ENCODE measurements at regions of chr17 and their contacts with region 1.

Region 1: DNA sequence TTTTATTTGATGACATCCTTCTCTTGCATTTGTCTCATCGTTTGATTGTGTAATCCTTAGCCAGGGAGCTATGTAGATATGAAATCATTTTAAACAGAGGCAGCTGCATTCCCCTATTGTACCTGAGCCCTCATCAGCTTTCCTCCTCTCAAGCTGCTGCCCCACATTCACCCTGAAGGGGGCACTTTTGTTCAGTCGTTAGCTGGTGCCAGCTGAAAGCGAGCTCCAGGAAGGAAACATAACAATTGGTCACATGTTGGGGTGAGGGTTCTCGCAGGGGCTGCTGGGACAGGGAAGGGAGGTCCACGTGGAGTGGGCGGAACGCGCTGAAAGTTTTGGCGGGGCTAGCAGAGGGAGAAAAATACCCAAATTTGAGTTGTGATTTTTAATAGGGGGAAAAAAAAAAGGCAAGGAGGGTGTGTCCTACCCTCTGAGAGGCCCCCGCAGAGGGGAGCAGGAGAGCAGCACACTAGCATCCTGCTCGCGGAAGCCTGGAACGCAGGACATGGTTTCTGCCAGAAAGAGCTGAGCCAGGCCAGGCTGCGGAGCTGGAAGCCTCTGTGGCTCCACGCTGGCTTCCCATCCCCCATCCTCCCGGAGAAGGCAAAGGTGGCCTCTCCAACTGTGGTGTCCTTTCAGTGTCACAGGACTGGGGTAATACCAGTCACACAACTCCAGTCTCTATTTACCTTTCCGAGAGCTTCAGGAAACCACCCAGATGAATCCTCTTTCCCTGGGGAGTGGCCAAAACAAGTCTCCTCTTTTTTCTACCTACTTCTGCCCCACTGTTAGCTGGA is 8.5 kb upstream of the MSL1 start:
- DNase-seq: peak; percentile 87
- ATAC-seq: peak; percentile 68
- H3K4me3 ChIP-seq: peak overlapping the region; percentile 41 to 44
- H3K27ac ChIP-seq: peak overlapping the region; percentile 71
- H3K4me1 ChIP-seq: peaks cover 60 to 70% of the 10 kb centered on the region in 2 experiments
- H3K27me3 ChIP-seq: no peaks in the 10 kb centered on the region
- CTCF ChIP-seq: peak; percentile 86 to 93 (median 91); a peak in 5 of 6 replicates
- POLR2A ChIP-seq: no peak
- RAD21 ChIP-seq: peak; percentile 96

Region 2: DNA sequence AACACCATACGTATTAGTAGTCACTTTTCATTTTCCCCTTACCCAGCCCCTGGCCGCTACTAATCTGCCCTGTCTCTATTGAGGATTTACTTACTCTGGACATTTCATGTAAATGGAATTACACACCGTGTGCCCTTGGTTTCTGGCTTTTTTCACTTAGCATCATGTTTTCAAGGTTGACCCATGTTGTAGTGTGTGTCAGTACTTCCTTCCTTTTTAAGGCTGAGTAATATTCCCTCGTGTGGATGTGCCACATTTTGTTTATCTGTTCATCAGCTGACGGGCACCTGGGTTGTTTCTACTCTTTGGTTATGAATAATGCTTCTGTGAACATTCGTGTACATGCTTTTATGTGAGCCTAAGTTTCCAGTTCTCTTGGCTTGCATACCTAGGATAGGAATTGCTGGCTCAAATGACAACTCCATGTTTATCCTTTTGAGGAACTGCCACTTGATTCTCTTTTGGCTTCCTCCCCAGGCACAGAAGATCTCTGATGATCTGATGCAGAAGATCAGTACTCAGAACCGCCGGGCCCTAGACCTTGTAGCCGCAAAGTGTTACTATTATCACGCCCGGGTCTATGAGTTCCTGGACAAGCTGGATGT is 125.0 kb before region 1 on chr17:
- CTCF ChIA-PET with region 1: no interaction called
- POLR2A ChIA-PET with region 1: no interaction called
- RAD21 ChIA-PET with region 1: no interaction called
- intact Hi-C with region 1: no loop called
- DNase-seq: no peak
- ATAC-seq: no peak
- H3K4me3 ChIP-seq: no peak overlapping the region
- H3K27ac ChIP-seq: no peak overlapping the region
- H3K4me1 ChIP-seq: no peaks in the 10 kb centered on the region
- H3K27me3 ChIP-seq: no peaks in the 10 kb centered on the region
- CTCF ChIP-seq: no peak
- POLR2A ChIP-seq: no peak
- RAD21 ChIP-seq: no peak

Region 3: DNA sequence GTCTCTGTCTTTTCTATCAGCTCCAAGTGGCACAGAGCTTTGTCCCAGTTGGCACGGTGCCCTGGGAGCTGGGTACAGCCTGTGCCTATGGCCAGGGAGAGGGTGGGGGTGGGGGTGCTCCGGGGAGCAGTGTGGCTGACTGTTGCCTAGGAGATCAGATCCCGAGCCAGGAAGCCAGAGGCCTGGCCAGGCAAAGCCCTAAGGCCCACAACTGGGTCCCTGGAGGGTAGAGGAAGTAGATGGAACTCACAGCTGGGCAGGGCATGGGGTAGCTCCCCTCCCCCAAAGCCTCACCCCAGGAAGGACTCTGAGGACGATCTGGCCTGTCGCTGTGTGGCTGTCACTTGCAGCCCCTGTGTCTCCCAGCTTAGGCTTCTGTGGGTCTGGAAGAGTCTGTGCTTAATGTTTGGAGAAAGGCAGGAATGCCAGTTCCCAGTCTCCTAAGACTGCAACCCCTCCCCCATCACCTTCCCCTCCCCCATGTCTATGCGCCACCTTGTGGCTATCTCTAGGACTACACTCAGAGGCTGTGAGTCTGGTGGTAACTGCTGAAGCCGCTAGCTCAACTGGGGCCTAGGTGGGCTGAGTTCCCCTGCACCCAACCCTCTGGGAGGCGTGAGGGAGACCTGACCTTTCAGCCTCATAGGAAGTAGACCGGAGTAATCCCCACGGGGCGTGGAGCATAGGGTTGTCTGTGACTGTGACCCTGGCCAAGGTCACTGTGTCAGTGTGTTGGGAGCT is 37.9 kb before region 1 on chr17:
- CTCF ChIA-PET with region 1: interaction called, 10 read pairs
- POLR2A ChIA-PET with region 1: no interaction called
- RAD21 ChIA-PET with region 1: interaction called in 1 of 2 experiments, 3 read pairs
- intact Hi-C with region 1: no loop called
- DNase-seq: no peak
- ATAC-seq: peak; percentile 76
- H3K4me3 ChIP-seq: no peak overlapping the region
- H3K27ac ChIP-seq: peak overlapping the region; percentile 52; the same call in 1 of the 2 replicates
- H3K4me1 ChIP-seq: peaks cover 50 to 52% of the 10 kb centered on the region in 2 experiments
- H3K27me3 ChIP-seq: no peaks in the 10 kb centered on the region
- CTCF ChIP-seq: peak in 2 of 3 experiments; percentile 90 to 91; a peak in 5 of 6 replicates
- POLR2A ChIP-seq: no peak
- RAD21 ChIP-seq: no peak

Region 4: DNA sequence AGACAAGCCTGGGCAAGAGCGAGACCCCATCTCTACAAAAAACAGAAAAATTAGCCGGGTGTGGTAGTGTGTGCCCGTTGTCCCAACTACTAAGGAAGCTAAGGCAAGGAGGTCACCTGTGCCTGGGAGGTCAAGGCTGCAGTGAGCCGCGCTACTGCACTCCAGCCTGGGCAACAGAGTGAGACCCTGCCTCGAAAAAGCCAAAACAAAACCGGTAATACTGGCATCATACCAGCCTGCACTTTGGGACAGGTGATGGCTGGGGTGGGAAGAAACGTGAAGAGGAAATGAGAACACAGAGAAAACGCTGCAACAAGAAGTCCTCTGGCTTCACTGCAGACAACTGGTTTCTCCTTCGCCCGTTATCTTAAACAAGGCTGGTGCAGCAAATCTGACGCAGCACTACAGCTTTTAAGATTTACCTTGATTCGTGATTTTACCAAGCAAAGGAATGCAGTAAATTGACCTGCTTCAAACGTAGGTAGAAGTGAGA is 26.3 kb after region 1 on chr17:
- CTCF ChIA-PET with region 1: interaction called, 8 read pairs
- POLR2A ChIA-PET with region 1: interaction called, 10 read pairs
- RAD21 ChIA-PET with region 1: interaction called, 3 to 5 read pairs
- intact Hi-C with region 1: loop called (anchors 1 kb)
- DNase-seq: no peak
- ATAC-seq: 0 out of 2 replicates have a peak, but pooled peaks have one; percentile 0
- H3K4me3 ChIP-seq: peak overlapping the region; percentile 81 to 95
- H3K27ac ChIP-seq: peak overlapping the region; percentile 95
- H3K4me1 ChIP-seq: peaks cover 6 to 21% of the 10 kb centered on the region in 2 experiments
- H3K27me3 ChIP-seq: no peaks in the 10 kb centered on the region
- CTCF ChIP-seq: no peak
- POLR2A ChIP-seq: no peak
- RAD21 ChIP-seq: no peak

Region 5: GRCh38 chr17:40179923-40180659 is 66.8 kb after region 1 on chr17:
- CTCF ChIA-PET with region 1: interaction called, 12 read pairs
- POLR2A ChIA-PET with region 1: interaction called, 3 read pairs
- RAD21 ChIA-PET with region 1: interaction called, 3 to 5 read pairs
- intact Hi-C with region 1: no loop called
- DNase-seq: no peak
- ATAC-seq: peak; percentile 70
- H3K4me3 ChIP-seq: peak overlapping the region; percentile 4 to 40; a peak in 3 of 4 replicates
- H3K27ac ChIP-seq: peak overlapping the region; percentile 86
- H3K4me1 ChIP-seq: peaks cover 51 to 62% of the 10 kb centered on the region in 2 experiments
- H3K27me3 ChIP-seq: no peaks in the 10 kb centered on the region
- CTCF ChIP-seq: no peak
- POLR2A ChIP-seq: no peak
- RAD21 ChIP-seq: no peak

Region 6: DNA sequence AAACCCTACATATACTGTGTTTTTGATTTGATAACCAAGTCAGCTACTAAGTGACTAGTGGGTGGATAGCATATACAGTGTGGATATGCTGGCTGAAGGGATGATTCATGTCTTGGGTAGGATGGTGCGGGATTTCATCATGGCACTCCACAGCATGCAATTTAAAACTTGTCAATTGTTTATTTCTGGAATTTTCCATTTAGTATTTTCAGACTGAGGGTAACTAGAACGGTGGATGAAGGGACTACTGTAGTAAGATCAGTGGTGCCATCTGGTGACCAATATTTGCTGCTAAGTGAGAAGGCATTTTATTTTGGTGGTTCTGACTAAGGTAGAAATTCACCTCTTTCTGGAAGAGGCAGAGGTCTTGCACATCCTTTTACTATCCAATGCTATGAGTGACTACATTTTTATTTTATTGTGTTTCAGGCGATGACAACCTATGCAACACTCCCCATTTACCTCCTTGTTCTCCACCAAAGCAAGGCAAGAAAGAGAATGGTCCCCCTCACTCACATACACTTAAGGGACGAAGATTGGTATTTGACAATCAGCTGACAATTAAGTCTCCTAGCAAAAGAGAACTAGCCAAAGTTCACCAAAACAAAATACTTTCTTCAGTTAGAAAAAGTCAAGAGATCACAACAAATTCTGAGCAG is 177.4 kb after region 1 on chr17:
- CTCF ChIA-PET with region 1: interaction called, 18 read pairs
- POLR2A ChIA-PET with region 1: no interaction called
- RAD21 ChIA-PET with region 1: interaction called, 4 read pairs
- intact Hi-C with region 1: loop called (anchors 1 kb)
- DNase-seq: peak; percentile 69
- ATAC-seq: no peak
- H3K4me3 ChIP-seq: no peak overlapping the region
- H3K27ac ChIP-seq: peak overlapping the region; percentile 15; the same call in 1 of the 2 replicates
- H3K4me1 ChIP-seq: peaks cover 14 to 19% of the 10 kb centered on the region in 2 experiments
- H3K27me3 ChIP-seq: no peaks in the 10 kb centered on the region
- CTCF ChIP-seq: peak; percentile 58 to 90 (median 69)
- POLR2A ChIP-seq: no peak
- RAD21 ChIP-seq: peak; percentile 91

Measured in HCT116 (cell line).